Left colon (tissue), 2 donors: ENCODE measurements at regions of chr11 and their contacts with region 1.

Region 1: GRCh38 chr11:46537537-46538295 is 56.1 kb downstream of the AMBRA1 start:
- DNase-seq: peak; percentile 61 to 62
- ATAC-seq: peak; percentile 61

Region 2: GRCh38 chr11:45879803-45880686 is 657.7 kb before region 1 on chr11:
- intact Hi-C with region 1: no loop called
- DNase-seq: no peak
- ATAC-seq: no peak

Region 3: GRCh38 chr11:46389450-46390253 is 148.1 kb before region 1 on chr11:
- intact Hi-C with region 1: loop called (anchors 5 to 10 kb)
- DNase-seq: peak in 1 of 2 donors; percentile 83
- ATAC-seq: peak; percentile 67